HCT116 (cell line): ENCODE measurements at regions of chr10 and their contacts with region 1.

Region 1: DNA sequence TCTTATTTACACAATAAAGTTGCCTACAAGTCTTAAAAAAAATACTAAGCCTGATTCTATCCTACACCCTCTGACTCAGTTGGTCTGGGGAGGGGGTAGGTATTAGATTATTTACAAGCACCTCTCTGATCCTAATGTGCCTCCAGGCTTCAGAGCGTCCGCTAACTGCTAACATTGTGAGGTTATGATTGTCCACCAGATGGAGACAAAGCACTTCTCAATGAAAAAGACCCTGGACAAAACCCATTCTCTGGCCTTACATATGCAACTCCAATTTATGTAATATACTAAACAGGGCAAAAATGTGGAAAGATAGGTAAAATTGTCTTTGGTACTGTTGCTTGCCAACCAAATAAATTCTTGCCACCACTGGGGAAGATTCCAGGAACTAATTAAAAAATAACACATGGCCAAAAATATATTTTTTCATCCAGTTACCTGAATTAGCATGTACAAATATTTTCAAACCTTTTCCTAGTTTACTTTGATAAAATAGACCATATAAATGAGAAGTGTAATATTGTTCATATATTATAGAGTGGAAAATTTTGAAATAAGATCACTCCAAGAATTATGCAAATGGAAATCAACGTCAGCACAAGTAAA is 92.4 kb downstream of the KIF20B start:
- DNase-seq: peak; percentile 73
- ATAC-seq: peak; percentile 88
- H3K4me3 ChIP-seq: no peak overlapping the region
- H3K27ac ChIP-seq: peak overlapping the region; percentile 55; the same call in 1 of the 2 replicates
- H3K4me1 ChIP-seq: peaks cover 25 to 26% of the 10 kb centered on the region in 2 experiments; a peak in 3 of 4 replicates
- H3K27me3 ChIP-seq: no peaks in the 10 kb centered on the region
- CTCF ChIP-seq: peak; percentile 65 to 90 (median 84)
- POLR2A ChIP-seq: no peak
- RAD21 ChIP-seq: peak; percentile 98

Region 2: GRCh38 chr10:89929282-89930026 is 135.7 kb after region 1 on chr10:
- CTCF ChIA-PET with region 1: no interaction called
- POLR2A ChIA-PET with region 1: no interaction called
- RAD21 ChIA-PET with region 1: no interaction called
- intact Hi-C with region 1: no loop called
- DNase-seq: no peak
- ATAC-seq: no peak
- H3K4me3 ChIP-seq: no peak overlapping the region
- H3K27ac ChIP-seq: no peak overlapping the region
- H3K4me1 ChIP-seq: peaks cover 0 to 11% of the 10 kb centered on the region in 2 experiments; a peak in 2 of 4 replicates
- H3K27me3 ChIP-seq: no peaks in the 10 kb centered on the region
- CTCF ChIP-seq: no peak
- POLR2A ChIP-seq: no peak
- RAD21 ChIP-seq: no peak

Region 3: DNA sequence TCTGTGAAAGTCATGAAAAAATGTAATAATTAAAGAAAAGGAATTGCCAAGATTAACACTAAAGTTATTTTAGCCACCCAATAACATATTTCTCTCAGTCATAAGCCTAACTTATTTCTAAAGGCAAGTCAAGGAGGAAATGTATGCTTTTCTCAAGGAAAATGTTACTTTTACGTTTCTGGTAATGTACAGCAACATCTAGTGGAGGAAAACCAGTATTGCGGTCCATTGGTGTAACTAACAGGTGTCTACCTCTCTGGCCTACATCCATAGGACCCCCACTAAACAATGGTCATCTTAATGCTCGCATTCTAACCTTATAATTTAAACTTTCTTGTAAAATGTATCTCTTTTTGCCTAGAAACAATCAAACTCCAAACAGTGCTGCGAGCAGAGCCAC is 345.1 kb after region 1 on chr10:
- CTCF ChIA-PET with region 1: no interaction called
- POLR2A ChIA-PET with region 1: no interaction called
- RAD21 ChIA-PET with region 1: no interaction called
- intact Hi-C with region 1: loop called (anchors 2 kb)
- DNase-seq: no peak
- ATAC-seq: no peak
- H3K4me3 ChIP-seq: no peak overlapping the region
- H3K27ac ChIP-seq: no peak overlapping the region
- H3K4me1 ChIP-seq: no peaks in the 10 kb centered on the region
- H3K27me3 ChIP-seq: no peaks in the 10 kb centered on the region
- CTCF ChIP-seq: peak; percentile 43 to 76 (median 63); a peak in 5 of 6 replicates
- POLR2A ChIP-seq: no peak
- RAD21 ChIP-seq: peak; percentile 72

Region 4: GRCh38 chr10:90652519-90652918 is 858.8 kb after region 1 on chr10:
- CTCF ChIA-PET with region 1: no interaction called
- POLR2A ChIA-PET with region 1: interaction called, 3 read pairs
- RAD21 ChIA-PET with region 1: interaction called in 1 of 2 experiments, 3 read pairs
- intact Hi-C with region 1: loop called (anchors 2 kb)
- DNase-seq: peak; percentile 34
- ATAC-seq: peak; percentile 84
- H3K4me3 ChIP-seq: no peak overlapping the region
- H3K27ac ChIP-seq: no peak overlapping the region; the same call in 1 of the 2 replicates
- H3K4me1 ChIP-seq: 0 out of 4 replicates have a peak, but pooled peaks cover 0 to 5% of the 10 kb centered on the region in 2 experiments
- H3K27me3 ChIP-seq: no peaks in the 10 kb centered on the region
- CTCF ChIP-seq: peak; percentile 37 to 66 (median 59); a peak in 5 of 6 replicates
- POLR2A ChIP-seq: no peak
- RAD21 ChIP-seq: peak; percentile 78

Region 5: DNA sequence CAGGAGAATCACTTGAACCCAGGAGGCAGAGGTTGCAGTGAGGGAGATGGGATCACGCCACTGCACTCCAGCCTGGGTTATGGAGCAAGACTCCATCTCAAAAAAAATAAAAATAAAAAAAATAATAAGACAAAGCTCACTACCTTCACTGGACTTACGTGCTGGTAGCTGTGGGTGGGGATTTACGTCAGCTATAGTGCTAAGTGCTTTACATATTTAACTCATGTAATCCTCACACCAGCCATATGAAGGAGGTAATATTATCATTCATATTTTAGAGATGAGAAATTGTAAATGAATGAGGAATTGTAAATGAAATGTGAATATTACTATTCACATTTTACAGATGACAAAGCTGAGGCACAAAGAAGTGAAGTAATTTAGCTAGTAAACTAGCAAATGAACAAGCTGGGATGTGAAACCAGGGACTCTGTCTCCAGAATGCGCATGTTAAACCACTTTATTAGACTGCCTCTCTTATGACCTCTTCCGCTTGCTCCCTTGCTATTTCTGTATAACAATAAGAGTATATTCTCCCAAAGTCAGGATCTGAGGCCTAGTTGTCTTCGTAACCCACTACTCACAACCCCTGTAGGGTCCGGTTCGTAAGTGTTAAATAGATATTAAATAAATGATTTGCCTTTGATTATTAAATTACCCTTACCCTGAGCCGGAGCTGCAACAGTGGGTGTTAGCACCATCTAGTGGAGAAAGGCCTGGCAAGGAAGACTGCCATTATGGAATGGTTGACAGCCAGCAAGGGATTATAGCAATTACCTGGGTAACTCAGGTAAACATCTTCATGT is 993.8 kb after region 1 on chr10:
- CTCF ChIA-PET with region 1: interaction called, 4 read pairs
- POLR2A ChIA-PET with region 1: no interaction called
- RAD21 ChIA-PET with region 1: no interaction called
- intact Hi-C with region 1: loop called (anchors 1 kb)
- DNase-seq: peak; percentile 27
- ATAC-seq: peak; percentile 86
- H3K4me3 ChIP-seq: no peak overlapping the region
- H3K27ac ChIP-seq: no peak overlapping the region
- H3K4me1 ChIP-seq: no peaks in the 10 kb centered on the region
- H3K27me3 ChIP-seq: no peaks in the 10 kb centered on the region
- CTCF ChIP-seq: peak; percentile 48 to 89 (median 88); a peak in 5 of 6 replicates
- POLR2A ChIP-seq: no peak
- RAD21 ChIP-seq: peak; percentile 72